ENCODE measurements at regions of chr2 and their contacts with region 1.

Region 1: DNA sequence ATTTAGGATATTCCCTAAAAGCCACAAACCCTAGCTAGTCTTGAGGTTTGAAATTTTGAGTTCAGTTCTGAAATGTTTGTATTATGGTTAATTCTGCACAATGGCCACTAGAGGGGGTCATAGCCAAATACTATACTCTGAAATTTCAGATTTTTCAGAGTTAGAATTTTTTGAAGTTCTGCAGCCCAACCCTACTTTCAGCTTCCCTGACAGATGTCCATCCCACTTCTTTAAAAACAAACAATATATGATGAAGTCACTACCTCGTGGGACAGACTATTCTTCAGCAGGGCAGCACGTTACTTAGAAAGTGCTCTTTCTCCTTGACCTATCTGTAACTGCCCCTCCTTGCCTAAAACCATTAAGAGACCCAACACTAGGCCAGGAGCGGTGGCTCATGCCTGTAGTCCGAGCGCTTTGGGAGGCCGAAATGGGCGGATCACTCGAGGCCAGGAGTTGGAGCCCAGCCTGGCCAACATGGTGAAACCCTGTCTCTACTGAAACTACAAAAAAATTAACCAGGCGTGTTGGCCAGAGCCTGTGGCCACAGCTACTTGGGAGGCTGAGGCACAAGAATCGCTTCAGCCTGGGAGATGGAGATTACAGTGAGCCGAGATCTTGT is 48.2 kb upstream of the PAPOLG start:
- DNase-seq: no peak
- ATAC-seq: peak; percentile 64
- H3K4me3 Mint-ChIP-seq: no peak overlapping the region
- H3K27ac Mint-ChIP-seq: no peak overlapping the region
- H3K4me1 Mint-ChIP-seq: no peaks in the 10 kb centered on the region
- H3K27me3 Mint-ChIP-seq: peaks cover 8% of the 10 kb centered on the region

Region 2: DNA sequence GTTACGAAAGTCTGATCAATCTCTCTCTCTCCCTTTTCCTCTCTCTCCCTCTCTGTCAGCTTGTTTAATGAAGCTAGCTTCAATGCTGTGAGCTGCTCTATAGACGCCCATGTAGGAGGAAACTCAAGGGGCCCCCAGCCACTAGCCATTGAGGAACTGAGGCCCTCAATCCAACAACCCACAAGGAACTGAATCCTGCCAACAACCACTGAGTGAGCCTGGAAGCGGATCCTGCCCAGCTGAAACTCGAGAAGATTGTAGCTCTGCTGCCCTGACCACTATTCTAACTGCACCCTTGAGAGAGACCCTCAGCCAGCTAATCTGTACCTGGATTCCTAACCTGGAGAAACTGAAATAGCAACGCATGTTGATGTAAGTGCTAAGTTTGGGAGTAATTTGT is 283.6 kb before region 1 on chr2:
- CTCF ChIA-PET with region 1: no interaction called
- DNase-seq: no peak
- ATAC-seq: no peak
- H3K4me3 Mint-ChIP-seq: no peak overlapping the region
- H3K27ac Mint-ChIP-seq: no peak overlapping the region
- H3K4me1 Mint-ChIP-seq: no peaks in the 10 kb centered on the region
- H3K27me3 Mint-ChIP-seq: no peaks in the 10 kb centered on the region

Region 3: GRCh38 chr2:60992985-60993392 is 285.1 kb after region 1 on chr2:
- CTCF ChIA-PET with region 1: interaction called, 61 read pairs
- DNase-seq: peak; percentile 51
- ATAC-seq: peak; percentile 99
- H3K4me3 Mint-ChIP-seq: peak overlapping the region; percentile 58
- H3K27ac Mint-ChIP-seq: peak overlapping the region; percentile 90
- H3K4me1 Mint-ChIP-seq: peaks cover 14% of the 10 kb centered on the region
- H3K27me3 Mint-ChIP-seq: no peaks in the 10 kb centered on the region

Measured in activated CD8-positive, alpha-beta memory T cell treated with anti-CD3 and anti-CD28 coated beads, Interleukin-2, amount 10 ng/mL, durations not matched to agents 7 days and 5 days (primary cell).